Activated CD4-positive, alpha-beta memory T cell treated with anti-CD3 and anti-CD28 coated beads for 36 hours (primary cell): ENCODE measurements at regions of chr19 and their contacts with region 1.

Region 1: DNA sequence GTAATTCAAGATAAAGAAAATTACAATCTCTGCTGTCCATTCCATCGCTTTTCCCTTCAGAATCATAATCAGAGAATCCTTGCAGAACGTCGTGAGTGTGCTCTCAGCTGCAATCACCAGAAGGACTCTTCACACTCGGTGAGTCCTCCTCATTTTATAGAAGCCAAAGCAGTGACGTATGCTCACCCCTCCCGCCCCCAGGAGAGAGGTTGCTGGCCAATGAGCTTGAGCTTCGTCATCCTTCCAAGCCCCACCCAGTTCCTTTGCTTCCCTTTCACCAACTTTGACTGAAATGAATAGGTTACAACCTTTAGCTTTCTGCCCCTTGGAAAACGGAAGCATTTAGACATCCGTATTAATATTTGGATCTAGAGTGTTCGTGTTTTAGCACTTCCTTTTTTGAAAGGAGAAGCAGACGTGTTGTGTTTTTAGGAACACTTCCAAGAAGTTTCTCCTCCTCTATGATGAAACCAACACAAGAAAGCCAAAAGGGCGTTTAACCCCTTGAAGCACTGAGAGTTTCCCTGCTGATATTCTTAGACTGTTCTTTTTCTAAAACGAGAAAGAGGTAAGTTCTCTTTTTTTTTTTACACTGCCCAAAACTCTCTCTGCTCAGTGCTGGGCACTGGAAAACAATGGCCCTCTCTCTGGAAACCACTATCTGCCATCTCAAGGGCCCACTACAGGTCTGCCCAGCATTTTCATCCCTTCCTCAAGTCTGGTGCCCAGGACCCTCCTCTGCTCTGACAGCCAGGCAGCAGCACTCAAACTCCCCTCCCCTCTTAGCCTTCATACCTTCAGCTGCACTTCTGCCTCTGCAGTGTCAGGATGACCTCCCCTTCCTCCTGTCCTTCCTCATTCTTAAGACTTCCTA is 44.3 kb upstream of the CEACAM21 start:
- DNase-seq: peak; percentile 92
- H3K4me3 Mint-ChIP-seq: peak overlapping the region; percentile 74
- H3K27ac Mint-ChIP-seq: peak overlapping the region; percentile 69
- H3K4me1 Mint-ChIP-seq: peaks cover 72% of the 10 kb centered on the region
- H3K27me3 Mint-ChIP-seq: peaks cover 4% of the 10 kb centered on the region

Region 2: GRCh38 chr19:41548954-41549688 is 17.4 kb after region 1 on chr19:
- CTCF ChIA-PET with region 1: interaction called, 20 read pairs
- POLR2A ChIA-PET with region 1: interaction called, 21 read pairs
- intact Hi-C with region 1: loop called (anchors 2 kb)
- DNase-seq: peak; percentile 88
- H3K4me3 Mint-ChIP-seq: peak overlapping the region; percentile 98
- H3K27ac Mint-ChIP-seq: peak overlapping the region; percentile 96
- H3K4me1 Mint-ChIP-seq: peaks cover 61% of the 10 kb centered on the region
- H3K27me3 Mint-ChIP-seq: no peaks in the 10 kb centered on the region

Region 3: GRCh38 chr19:41554907-41555306 is 23.2 kb after region 1 on chr19:
- CTCF ChIA-PET with region 1: no interaction called
- POLR2A ChIA-PET with region 1: interaction called, 21 read pairs
- intact Hi-C with region 1: no loop called
- DNase-seq: no peak
- H3K4me3 Mint-ChIP-seq: peak overlapping the region; percentile 11
- H3K27ac Mint-ChIP-seq: peak overlapping the region; percentile 96
- H3K4me1 Mint-ChIP-seq: peaks cover 70% of the 10 kb centered on the region
- H3K27me3 Mint-ChIP-seq: no peaks in the 10 kb centered on the region

Region 4: GRCh38 chr19:41563854-41564514 is 32.3 kb after region 1 on chr19:
- CTCF ChIA-PET with region 1: interaction called, 30 read pairs
- POLR2A ChIA-PET with region 1: interaction called, 4 read pairs
- intact Hi-C with region 1: no loop called
- DNase-seq: peak; percentile 74
- H3K4me3 Mint-ChIP-seq: peak overlapping the region; percentile 62
- H3K27ac Mint-ChIP-seq: peak overlapping the region; percentile 38
- H3K4me1 Mint-ChIP-seq: peaks cover 72% of the 10 kb centered on the region
- H3K27me3 Mint-ChIP-seq: no peaks in the 10 kb centered on the region